Activated CD4-positive, alpha-beta memory T cell treated with anti-CD3 and anti-CD28 coated beads for 36 hours (primary cell): ENCODE measurements at regions of chr3 and their contacts with region 1.

Region 1: DNA sequence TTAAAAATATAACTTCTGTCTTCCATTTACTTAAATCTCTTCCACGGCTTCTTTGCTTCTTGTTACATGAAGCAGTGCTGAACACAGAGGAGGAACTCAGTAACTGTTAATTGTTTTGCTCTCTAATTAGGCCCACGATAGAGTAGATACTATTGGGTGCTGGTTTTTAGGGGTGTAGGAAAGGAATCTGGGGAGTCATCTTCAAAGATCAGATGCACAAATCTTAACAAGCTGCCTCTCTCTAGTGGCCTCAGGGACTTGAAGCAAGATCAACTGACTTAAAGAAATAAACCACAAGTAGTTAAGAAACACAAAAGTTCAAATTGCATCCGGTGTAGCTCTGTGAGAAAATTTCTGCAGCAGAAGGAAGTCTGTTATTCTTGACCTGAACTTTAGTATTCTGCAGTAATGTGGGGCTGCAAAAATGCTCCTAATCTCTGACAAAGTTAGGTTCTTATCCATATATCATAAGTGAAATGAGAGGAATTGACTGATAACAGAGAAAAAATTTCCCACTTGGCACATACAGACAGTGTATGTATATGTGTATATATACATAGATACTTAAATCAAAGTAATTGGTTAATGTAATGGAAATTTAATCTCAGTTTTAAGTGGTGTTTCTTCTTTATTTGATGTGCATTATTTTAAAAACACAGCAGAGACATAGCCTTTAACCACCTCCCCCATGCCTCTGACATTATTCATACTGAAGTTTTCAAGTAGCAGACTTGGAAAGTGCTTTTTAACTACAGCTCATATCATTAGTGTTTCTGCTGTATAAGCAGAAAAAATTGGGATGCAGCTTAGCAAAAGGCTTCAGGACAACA is 51.8 kb downstream of the CHST2 start:
- DNase-seq: no peak
- H3K4me3 Mint-ChIP-seq: no peak overlapping the region
- H3K27ac Mint-ChIP-seq: peak overlapping the region; percentile 78
- H3K4me1 Mint-ChIP-seq: peaks cover 45% of the 10 kb centered on the region
- H3K27me3 Mint-ChIP-seq: no peaks in the 10 kb centered on the region

Region 2: GRCh38 chr3:143001369-143002082 is 169.8 kb before region 1 on chr3 and contains the start of gene U2SURP:
- CTCF ChIA-PET with region 1: no interaction called
- POLR2A ChIA-PET with region 1: no interaction called
- intact Hi-C with region 1: loop called (anchors 5 kb)
- DNase-seq: peak; percentile 95
- H3K4me3 Mint-ChIP-seq: peak within 1 kb of the TSS; percentile 88
- H3K27ac Mint-ChIP-seq: peak within 1 kb of the TSS; percentile 96
- H3K4me1 Mint-ChIP-seq: peaks cover 34% of the 10 kb centered on the region
- H3K27me3 Mint-ChIP-seq: no peaks in the 10 kb centered on the region
- total RNA-seq, gene U2SURP: 178 to 182 TPM

Region 3: DNA sequence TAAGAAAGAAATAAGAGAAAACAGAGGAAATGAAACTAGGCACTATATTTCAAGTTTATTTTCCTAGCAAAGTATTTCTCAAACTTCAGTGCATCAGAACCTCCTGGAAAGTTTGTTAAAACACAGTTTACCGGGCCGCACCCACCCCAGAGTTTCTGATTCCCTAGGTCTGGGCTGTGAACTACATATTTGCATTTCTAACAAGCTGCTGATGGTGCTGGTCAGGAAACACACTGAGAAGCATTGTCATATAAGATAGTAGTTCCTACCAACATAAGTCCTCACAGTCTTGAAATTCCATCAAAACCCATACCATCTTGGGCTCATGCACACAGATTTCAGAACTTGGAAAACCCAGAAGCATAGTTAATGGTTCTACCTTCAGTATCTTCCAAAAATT is 668.6 kb after region 1 on chr3:
- CTCF ChIA-PET with region 1: no interaction called
- POLR2A ChIA-PET with region 1: no interaction called
- intact Hi-C with region 1: loop called (anchors 5 kb)
- DNase-seq: no peak
- H3K4me3 Mint-ChIP-seq: no peak overlapping the region
- H3K27ac Mint-ChIP-seq: no peak overlapping the region
- H3K4me1 Mint-ChIP-seq: peaks cover 51% of the 10 kb centered on the region
- H3K27me3 Mint-ChIP-seq: no peaks in the 10 kb centered on the region